Naive thymus-derived CD4-positive, alpha-beta T cell (primary cell): ENCODE measurements at regions of chr19 and their contacts with region 1.

Region 1: DNA sequence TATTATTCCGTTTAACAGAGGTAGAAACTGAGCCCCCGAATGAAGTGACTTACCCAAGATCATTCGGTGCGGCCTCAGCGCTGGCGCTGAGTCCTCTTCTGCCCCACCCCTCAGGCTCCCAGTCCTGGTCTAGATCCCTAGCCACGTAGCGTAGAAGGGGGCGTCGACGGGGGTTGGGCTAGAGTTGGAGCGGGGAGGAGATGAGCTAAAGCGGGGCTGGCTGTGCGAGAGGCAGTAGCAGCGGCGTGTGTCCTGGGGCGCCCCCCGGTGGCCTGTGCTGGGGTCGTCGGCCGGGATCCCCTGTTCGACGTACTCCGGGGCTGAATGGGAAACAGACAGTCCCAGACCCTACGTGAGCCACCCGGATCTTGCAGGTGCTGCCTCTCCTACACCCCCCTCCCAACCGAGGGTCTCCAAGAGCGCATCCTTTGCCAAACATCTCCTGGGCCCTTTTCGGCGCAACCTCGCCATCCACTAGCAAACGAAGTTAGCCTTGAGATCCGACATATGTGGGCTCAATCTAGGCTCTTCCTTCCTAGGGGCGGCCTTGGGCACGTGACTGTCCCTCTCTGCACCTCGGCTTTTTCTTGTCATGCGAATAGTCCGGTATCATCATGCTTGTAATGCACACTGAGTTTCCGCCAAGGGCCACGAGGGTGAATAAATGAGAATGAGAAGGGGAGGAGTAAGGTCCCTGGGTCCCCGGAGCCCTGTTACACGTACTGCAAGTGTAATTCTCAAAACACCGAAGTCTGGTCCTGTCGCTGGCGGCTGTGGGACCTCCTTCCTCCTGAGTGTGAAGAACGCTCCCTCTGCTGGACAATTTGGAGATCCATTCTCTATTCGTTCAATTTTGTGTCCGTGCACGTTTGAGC is 47.7 kb downstream of the CYP4F22 start:
- DNase-seq: peak; percentile 89 to 98 (median 94)
- ATAC-seq: peak; percentile 93
- H3K4me3 ChIP-seq: peak overlapping the region; percentile 62
- H3K4me3 Mint-ChIP-seq: peak overlapping the region; percentile 79 to 96 (median 86)
- H3K27ac ChIP-seq: peak overlapping the region; percentile 67
- H3K27ac Mint-ChIP-seq: peak overlapping the region; percentile 65 to 94 (median 91)
- H3K4me1 ChIP-seq: peaks cover 5 to 8% of the 10 kb centered on the region in 2 donors
- H3K4me1 Mint-ChIP-seq: peaks cover 21 to 37% (median 27%) of the 10 kb centered on the region in 7 donors
- H3K27me3 ChIP-seq: no peaks in the 10 kb centered on the region
- H3K27me3 Mint-ChIP-seq: peaks cover 0 to 8% (median 0%) of the 10 kb centered on the region in 5 donors

Region 2: DNA sequence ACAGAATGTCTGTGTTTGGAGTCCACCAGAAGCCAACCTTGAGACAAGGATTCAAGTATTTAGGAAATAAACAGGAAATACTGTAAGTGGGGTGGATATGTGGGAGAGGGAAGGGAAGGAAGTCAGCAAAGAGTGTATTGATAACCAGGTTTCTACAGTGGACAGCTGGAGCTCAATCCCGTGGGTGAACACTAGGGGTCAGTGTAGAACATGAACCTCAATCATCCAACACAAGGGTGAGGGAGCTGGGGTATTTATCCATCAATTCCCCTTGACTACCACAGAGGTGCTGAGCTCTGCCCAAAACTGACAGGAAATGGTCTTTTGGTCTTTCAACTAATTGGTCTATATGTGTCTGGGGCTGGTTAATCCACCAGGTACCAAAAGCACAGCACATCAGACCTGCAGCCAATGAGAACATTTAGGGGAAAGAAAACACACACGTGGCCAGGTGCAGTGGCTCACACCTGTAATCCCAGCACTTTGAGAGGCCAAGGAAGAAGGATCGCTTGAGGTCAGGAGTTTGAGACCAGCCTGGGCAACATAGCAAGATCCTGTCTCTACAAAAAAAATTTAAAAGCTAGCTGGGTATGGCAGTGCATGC is 454.4 kb before region 1 on chr19:
- CTCF ChIA-PET with region 1: no interaction called
- POLR2A ChIA-PET with region 1: no interaction called
- intact Hi-C with region 1: loop called in 1 of 2 experiments (anchors 1 kb)
- DNase-seq: peak in 7 of 9 donors; percentile 21 to 57 (median 49)
- ATAC-seq: peak; percentile 79
- H3K4me3 ChIP-seq: no peak overlapping the region
- H3K4me3 Mint-ChIP-seq: no peak overlapping the region
- H3K27ac ChIP-seq: no peak overlapping the region
- H3K27ac Mint-ChIP-seq: peak overlapping the region in 2 of 9 donors; percentile 8 to 38
- H3K4me1 ChIP-seq: no peaks in the 10 kb centered on the region
- H3K4me1 Mint-ChIP-seq: peaks cover under 1 to 8% (median 6%) of the 10 kb centered on the region in 7 donors
- H3K27me3 ChIP-seq: no peaks in the 10 kb centered on the region
- H3K27me3 Mint-ChIP-seq: peaks cover 0 to 7% (median 2%) of the 10 kb centered on the region in 5 donors

Region 3: GRCh38 chr19:15177269-15178116 is 378.5 kb before region 1 on chr19:
- CTCF ChIA-PET with region 1: interaction called, 7 read pairs
- POLR2A ChIA-PET with region 1: no interaction called
- intact Hi-C with region 1: loop called in 1 of 2 experiments (anchors 1 kb)
- DNase-seq: peak; percentile 66 to 88 (median 82)
- ATAC-seq: peak; percentile 99
- H3K4me3 ChIP-seq: no peak overlapping the region
- H3K4me3 Mint-ChIP-seq: peak overlapping the region; percentile 29 to 84 (median 53)
- H3K27ac ChIP-seq: no peak overlapping the region
- H3K27ac Mint-ChIP-seq: peak overlapping the region in 1 of 9 donors; percentile 47
- H3K4me1 ChIP-seq: peaks cover 0 to 5% of the 10 kb centered on the region in 2 donors
- H3K4me1 Mint-ChIP-seq: peaks cover 4 to 8% (median 5%) of the 10 kb centered on the region in 7 donors
- H3K27me3 ChIP-seq: no peaks in the 10 kb centered on the region
- H3K27me3 Mint-ChIP-seq: peaks cover 0 to 20% (median 9%) of the 10 kb centered on the region in 5 donors

Region 4: GRCh38 chr19:15332311-15332996 is 223.5 kb before region 1 on chr19 and contains the start of gene BRD4:
- CTCF ChIA-PET with region 1: no interaction called
- POLR2A ChIA-PET with region 1: interaction called, 7 read pairs
- intact Hi-C with region 1: loop called in 1 of 2 experiments (anchors 1 kb)
- DNase-seq: peak; percentile 67 to 90 (median 81)
- ATAC-seq: peak; percentile 82
- H3K4me3 ChIP-seq: peak within 1 kb of the TSS; percentile 91
- H3K4me3 Mint-ChIP-seq: peak within 1 kb of the TSS; percentile 93 to 99 (median 96)
- H3K27ac ChIP-seq: peak within 1 kb of the TSS; percentile 91
- H3K27ac Mint-ChIP-seq: peak within 1 kb of the TSS; percentile 85 to 96 (median 94)
- H3K4me1 ChIP-seq: peaks cover 28 to 29% of the 10 kb centered on the region in 2 donors
- H3K4me1 Mint-ChIP-seq: peaks cover 32 to 52% (median 47%) of the 10 kb centered on the region in 7 donors
- H3K27me3 ChIP-seq: no peaks in the 10 kb centered on the region
- H3K27me3 Mint-ChIP-seq: no peaks in the 10 kb centered on the region
- total RNA-seq, gene BRD4: 104 to 168 (median 128) TPM

Region 5: DNA sequence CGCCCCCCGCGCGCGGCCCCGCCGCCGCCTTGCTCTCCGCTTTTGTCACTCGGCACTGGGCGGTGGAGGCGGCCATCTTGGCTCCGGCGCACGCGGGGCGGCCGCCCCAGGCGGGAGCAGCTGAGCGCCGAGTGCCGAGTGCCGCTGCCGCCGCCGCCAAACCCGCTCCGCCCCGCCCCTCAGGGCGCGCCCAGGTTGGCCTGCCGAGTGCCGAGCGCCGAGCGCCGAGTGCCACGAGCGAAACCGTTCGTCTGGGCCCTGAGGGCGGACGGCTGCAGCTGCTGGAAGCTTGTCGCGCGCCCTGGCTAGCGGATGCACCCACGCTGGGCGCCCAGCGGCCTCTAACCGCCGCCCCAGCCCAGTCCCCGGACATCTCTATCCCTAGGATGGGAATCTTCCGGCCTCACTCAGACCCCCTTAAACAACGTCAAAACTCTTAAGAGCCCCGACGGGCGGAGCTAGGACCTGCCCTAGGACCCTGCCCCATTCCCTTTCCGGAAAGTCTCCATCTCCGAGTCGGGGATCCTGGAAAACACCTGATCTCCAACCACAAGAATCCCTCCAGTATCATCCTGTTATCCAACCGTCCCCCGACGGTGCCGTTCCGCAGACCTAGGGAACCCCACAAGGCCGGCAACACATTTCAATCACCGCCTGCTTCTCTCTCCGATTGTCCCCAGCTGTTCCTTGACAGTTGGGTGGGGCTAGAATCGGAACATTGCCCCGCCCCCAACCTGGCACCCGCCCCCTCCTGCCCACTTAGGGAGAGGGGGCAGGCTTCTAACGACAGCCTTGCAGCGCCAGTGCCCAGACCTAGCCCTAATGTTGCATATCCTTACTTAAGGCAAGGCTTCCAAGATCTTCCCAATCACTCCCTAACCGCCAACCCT is 123.1 kb before region 1 on chr19:
- CTCF ChIA-PET with region 1: interaction called, 5 read pairs
- POLR2A ChIA-PET with region 1: interaction called, 19 read pairs
- intact Hi-C with region 1: loop called (anchors 1 kb)
- DNase-seq: peak; percentile 87 to 95 (median 92)
- ATAC-seq: peak; percentile 99
- H3K4me3 ChIP-seq: peak overlapping the region; percentile 96
- H3K4me3 Mint-ChIP-seq: peak overlapping the region; percentile 86 to 99 (median 97)
- H3K27ac ChIP-seq: peak overlapping the region; percentile 90
- H3K27ac Mint-ChIP-seq: peak overlapping the region; percentile 85 to 98 (median 94)
- H3K4me1 ChIP-seq: peaks cover 15 to 26% of the 10 kb centered on the region in 2 donors
- H3K4me1 Mint-ChIP-seq: peaks cover 24 to 32% (median 29%) of the 10 kb centered on the region in 7 donors
- H3K27me3 ChIP-seq: no peaks in the 10 kb centered on the region
- H3K27me3 Mint-ChIP-seq: peaks cover 0 to 2% (median 0%) of the 10 kb centered on the region in 5 donors

Region 6: DNA sequence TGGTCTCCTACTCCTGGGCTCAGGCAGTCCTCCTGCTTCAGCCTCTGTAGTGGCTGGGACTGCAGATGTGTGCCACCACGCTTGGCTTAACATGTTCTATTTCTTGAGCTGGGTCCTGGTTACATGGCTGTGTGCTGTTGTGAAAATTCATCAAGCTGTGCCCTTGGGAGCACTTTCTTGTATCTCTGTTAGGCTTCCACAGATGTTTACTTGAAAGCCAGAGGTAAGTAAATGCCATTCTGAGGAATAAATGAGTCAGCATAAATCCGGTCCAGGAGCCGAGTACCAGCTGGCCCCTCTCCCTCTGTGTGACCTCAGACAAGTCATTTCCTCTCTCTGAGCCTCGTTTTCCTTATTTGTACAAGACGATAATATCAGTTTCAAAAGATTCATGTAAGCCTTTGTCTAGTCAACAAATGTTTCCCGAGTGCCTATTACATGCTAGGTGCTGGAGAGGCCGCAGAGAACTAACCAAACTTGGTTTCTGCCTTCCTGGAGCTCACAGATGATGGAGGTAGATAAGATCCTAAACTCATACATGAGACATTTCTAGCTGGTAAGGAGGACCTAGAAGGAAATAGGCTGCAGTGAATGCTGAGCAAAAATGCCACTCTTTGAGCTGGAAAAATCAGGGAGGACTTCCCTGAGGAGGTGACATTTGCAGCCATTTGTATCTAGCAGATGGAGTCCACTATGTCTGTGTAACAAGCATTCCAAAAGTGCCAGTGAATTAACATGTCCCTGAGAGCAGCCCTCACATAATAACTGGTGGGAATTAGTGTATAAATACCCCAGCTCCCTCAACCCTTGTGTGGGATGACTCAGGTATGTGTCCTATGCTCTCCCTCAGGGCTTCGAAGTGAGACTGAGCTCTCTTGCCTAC is 88.9 kb before region 1 on chr19:
- CTCF ChIA-PET with region 1: interaction called, 19 read pairs
- POLR2A ChIA-PET with region 1: interaction called, 30 read pairs
- intact Hi-C with region 1: loop called (anchors 1 kb)
- DNase-seq: peak in 6 of 9 donors; percentile 17 to 58 (median 32)
- ATAC-seq: peak; percentile 42
- H3K4me3 ChIP-seq: peak overlapping the region; percentile 1
- H3K4me3 Mint-ChIP-seq: peak overlapping the region; percentile 63 to 95 (median 76)
- H3K27ac ChIP-seq: peak overlapping the region; percentile 52
- H3K27ac Mint-ChIP-seq: peak overlapping the region; percentile 85 to 95 (median 87)
- H3K4me1 ChIP-seq: peaks cover 43 to 47% of the 10 kb centered on the region in 2 donors
- H3K4me1 Mint-ChIP-seq: peaks cover 39 to 75% (median 53%) of the 10 kb centered on the region in 7 donors
- H3K27me3 ChIP-seq: no peaks in the 10 kb centered on the region
- H3K27me3 Mint-ChIP-seq: peaks cover 0 to 14% (median 0%) of the 10 kb centered on the region in 5 donors